ENCODE measurements at regions of chr15 and their contacts with region 1.

Region 1: GRCh38 chr15:73240866-73241499 is 127.8 kb downstream of the HCN4 start:
- DNase-seq: peak; percentile 82
- H3K4me3 Mint-ChIP-seq: no peak overlapping the region
- H3K27ac Mint-ChIP-seq: no peak overlapping the region
- H3K4me1 Mint-ChIP-seq: no peaks in the 10 kb centered on the region
- H3K27me3 Mint-ChIP-seq: no peaks in the 10 kb centered on the region

Region 2: DNA sequence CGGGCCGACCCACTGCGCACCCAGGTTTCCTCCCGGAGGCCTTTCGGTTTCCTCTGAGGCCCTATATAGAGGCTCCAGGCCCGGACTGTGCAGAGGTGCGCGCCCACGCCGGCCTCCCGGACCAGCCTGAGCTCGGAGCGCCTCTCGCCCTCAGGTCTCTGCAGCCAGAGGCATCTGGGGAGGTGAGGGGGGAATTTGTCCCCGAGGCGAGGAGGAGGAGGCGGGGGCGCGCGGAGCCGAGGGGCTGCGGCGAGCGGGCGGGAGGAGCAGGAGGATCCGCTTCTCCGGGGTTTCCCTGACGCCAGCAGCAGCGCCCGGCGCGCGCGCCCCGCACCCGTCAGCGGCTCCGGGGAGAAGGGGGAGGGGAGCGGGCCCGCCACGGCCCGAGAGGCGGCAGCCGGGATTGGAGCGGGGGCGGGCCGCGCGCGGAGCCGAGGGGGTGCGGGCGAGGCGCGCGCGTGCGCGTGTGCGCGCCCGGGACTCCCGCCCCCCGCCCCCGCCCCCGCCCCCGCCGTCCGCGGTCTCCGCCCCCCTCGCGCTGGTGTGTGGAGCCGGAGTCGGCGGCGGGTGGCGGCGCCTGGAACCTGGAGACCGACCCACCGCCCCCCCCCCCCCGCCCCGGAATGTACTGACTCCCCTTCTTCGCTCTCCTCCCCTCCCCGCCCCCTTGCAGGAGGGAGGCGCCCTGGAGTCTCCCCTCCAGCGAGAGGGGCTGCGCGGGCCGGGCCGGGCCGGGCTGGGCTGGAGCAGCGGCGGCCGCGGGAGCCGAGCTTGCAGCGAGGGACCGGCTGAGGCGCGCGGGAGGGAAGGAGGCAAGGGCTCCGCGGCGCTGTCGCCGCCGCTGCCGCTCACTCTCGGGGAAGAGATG is 188.9 kb before region 1 on chr15 and contains the start of gene NEO1:
- CTCF ChIA-PET with region 1: no interaction called
- POLR2A ChIA-PET with region 1: no interaction called
- intact Hi-C with region 1: loop called (anchors 5 kb)
- DNase-seq: peak; percentile 84
- H3K4me3 Mint-ChIP-seq: peak within 1 kb of the TSS; percentile 78
- H3K27ac Mint-ChIP-seq: no peak within 1 kb of the TSS
- H3K4me1 Mint-ChIP-seq: peaks cover 7% of the 10 kb centered on the region
- H3K27me3 Mint-ChIP-seq: peaks cover 7% of the 10 kb centered on the region
- total RNA-seq, gene NEO1: 8.3 to 9.3 TPM

Region 3: DNA sequence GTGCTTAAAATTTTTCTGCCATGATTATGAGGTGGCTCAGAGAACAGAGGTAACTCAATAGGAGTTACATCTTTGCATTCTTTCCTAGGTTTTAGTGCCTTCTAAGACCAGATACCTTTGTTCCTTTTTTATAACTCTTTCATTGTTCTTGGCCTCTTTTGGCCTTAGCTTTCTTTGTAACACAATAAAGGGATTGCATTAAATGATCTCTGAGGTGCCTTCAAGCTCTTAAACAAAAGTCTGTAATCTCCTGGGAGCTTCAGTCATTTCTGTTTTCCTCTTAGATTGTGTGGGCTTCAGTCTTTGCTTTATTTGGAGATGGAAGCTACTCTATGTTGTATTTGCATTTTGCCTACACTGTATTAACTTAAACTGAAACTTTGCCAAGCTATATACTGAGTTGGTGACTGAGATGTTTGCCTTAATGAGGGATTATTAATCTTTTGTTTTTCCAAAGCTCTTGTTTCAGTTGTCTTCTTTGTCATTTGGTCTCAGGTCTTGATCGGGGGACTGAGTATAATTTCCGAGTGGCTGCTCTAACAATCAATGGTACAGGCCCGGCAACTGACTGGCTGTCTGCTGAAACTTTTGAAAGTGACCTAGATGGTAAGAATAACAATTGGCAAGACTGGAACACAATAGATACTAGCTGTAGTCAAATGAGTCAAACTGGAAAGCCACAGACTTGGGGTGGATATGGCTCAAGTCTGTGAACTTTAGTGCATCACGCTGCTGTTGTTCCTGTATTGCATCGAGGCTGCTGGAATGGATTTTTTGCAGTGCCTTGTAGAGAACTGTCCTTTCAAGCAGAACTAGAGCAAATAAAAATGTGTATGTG is 17.5 kb after region 1 on chr15:
- CTCF ChIA-PET with region 1: interaction called, 93 read pairs
- POLR2A ChIA-PET with region 1: no interaction called
- intact Hi-C with region 1: no loop called
- DNase-seq: peak; percentile 40
- H3K4me3 Mint-ChIP-seq: no peak overlapping the region
- H3K27ac Mint-ChIP-seq: no peak overlapping the region
- H3K4me1 Mint-ChIP-seq: peaks cover 8% of the 10 kb centered on the region
- H3K27me3 Mint-ChIP-seq: no peaks in the 10 kb centered on the region

Region 4: DNA sequence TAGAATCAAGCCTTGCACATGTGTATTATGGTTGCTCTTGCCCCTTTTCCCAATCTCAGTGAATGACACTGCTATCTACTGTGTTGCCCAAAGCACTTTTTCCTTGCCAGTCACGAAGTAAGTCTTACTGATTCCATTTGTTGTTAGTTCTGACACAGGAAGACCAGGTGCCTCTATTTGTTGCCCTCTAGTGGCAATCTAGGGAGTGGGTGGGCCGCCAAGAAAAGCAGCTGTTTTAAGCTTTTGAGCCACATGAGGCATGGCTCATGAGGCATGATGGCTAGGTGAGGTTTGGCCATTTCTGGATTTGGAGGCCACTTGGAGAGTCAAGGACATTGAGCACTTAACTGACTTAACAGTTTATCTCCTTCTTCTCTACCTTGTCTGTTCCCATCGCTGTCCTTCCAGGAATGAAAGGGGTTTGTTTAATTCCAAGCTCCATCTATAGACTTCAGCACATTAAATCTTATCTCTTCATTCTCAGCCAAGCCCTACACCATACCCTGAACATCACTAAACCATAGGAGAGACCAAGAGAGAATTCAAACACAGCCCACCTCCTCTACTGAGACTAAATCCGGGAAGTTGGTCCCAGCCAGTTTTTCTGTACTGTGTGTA is 24.7 kb after region 1 on chr15:
- CTCF ChIA-PET with region 1: interaction called, 93 read pairs
- POLR2A ChIA-PET with region 1: no interaction called
- intact Hi-C with region 1: loop called (anchors 2 kb)
- DNase-seq: peak; percentile 72
- H3K4me3 Mint-ChIP-seq: no peak overlapping the region
- H3K27ac Mint-ChIP-seq: no peak overlapping the region
- H3K4me1 Mint-ChIP-seq: peaks cover 4% of the 10 kb centered on the region
- H3K27me3 Mint-ChIP-seq: no peaks in the 10 kb centered on the region

Region 5: GRCh38 chr15:73273181-73274002 is 32.4 kb after region 1 on chr15:
- CTCF ChIA-PET with region 1: interaction called, 73 read pairs
- POLR2A ChIA-PET with region 1: no interaction called
- intact Hi-C with region 1: loop called (anchors 1 kb)
- DNase-seq: peak; percentile 60
- H3K4me3 Mint-ChIP-seq: no peak overlapping the region
- H3K27ac Mint-ChIP-seq: no peak overlapping the region
- H3K4me1 Mint-ChIP-seq: peaks cover 4% of the 10 kb centered on the region
- H3K27me3 Mint-ChIP-seq: no peaks in the 10 kb centered on the region

Region 6: GRCh38 chr15:73318463-73319351 is 77.7 kb after region 1 on chr15:
- CTCF ChIA-PET with region 1: no interaction called
- POLR2A ChIA-PET with region 1: no interaction called
- intact Hi-C with region 1: no loop called
- DNase-seq: no peak
- H3K4me3 Mint-ChIP-seq: no peak overlapping the region
- H3K27ac Mint-ChIP-seq: no peak overlapping the region
- H3K4me1 Mint-ChIP-seq: no peaks in the 10 kb centered on the region
- H3K27me3 Mint-ChIP-seq: peaks cover 11% of the 10 kb centered on the region

Region 7: DNA sequence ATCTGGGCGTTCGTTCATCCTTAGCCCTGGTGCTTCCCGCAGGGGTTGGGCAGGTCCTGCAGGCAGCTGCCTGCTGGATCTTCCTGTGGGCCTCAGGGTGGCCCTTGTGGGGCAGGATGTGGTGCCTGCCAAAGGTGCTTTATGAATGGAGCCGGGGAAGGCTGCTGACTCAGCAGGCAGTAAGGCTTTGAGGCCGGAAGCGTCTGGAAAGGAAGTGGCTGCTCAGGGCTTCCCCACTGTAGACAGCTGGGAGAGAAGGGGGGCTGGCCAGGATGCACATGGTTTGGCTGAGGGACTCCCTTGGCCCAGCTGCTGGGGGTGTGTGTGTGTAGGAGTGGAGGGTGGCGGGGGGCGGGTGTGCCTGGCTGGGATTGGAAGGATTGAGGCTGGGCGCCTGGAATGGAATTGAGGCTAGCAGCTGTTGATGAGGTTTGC is 456.1 kb after region 1 on chr15:
- CTCF ChIA-PET with region 1: interaction called, 13 read pairs
- POLR2A ChIA-PET with region 1: no interaction called
- intact Hi-C with region 1: loop called (anchors 1 kb)
- DNase-seq: peak; percentile 92
- H3K4me3 Mint-ChIP-seq: peak overlapping the region; percentile 30
- H3K27ac Mint-ChIP-seq: peak overlapping the region; percentile 36
- H3K4me1 Mint-ChIP-seq: peaks cover 31% of the 10 kb centered on the region
- H3K27me3 Mint-ChIP-seq: peaks cover 53% of the 10 kb centered on the region